Activated CD4-positive, alpha-beta T cell treated with anti-CD3 and anti-CD28 coated beads, Interleukin-2, amount 10 ng/mL, durations not matched to agents 7 days and 5 days (primary cell): ENCODE measurements at regions of chr14 and their contacts with region 1.

Region 1: GRCh38 chr14:64434528-64434927 is 30.8 kb upstream of the AKAP5 start:
- DNase-seq: no peak
- H3K4me3 Mint-ChIP-seq: no peak overlapping the region
- H3K27ac Mint-ChIP-seq: no peak overlapping the region
- H3K4me1 Mint-ChIP-seq: peaks cover 19% of the 10 kb centered on the region
- H3K27me3 Mint-ChIP-seq: no peaks in the 10 kb centered on the region

Region 2: GRCh38 chr14:64400829-64401459 is 33.6 kb before region 1 on chr14:
- CTCF ChIA-PET with region 1: interaction called, 10 read pairs
- POLR2A ChIA-PET with region 1: no interaction called
- DNase-seq: no peak
- H3K4me3 Mint-ChIP-seq: no peak overlapping the region
- H3K27ac Mint-ChIP-seq: no peak overlapping the region
- H3K4me1 Mint-ChIP-seq: peaks cover 15% of the 10 kb centered on the region
- H3K27me3 Mint-ChIP-seq: no peaks in the 10 kb centered on the region

Region 3: DNA sequence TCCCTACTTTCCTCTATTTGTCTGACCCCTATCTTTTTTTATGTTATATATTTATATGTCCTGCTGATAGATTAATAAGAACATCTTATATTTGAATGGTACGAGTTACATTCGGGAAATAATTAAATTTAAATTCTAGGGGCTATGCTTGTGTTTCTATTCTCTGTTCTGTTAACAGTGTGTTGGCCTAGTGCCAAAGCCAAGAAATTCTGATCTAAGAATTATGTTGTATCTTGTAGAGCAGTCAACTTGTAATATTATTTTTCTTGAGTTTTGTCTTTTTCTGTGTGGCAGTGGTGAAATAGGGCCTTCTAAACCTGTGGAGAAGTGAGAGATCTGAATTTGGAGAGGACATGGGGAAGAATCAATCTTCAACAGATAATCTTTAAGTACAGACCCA is 97.0 kb after region 1 on chr14:
- CTCF ChIA-PET with region 1: no interaction called
- POLR2A ChIA-PET with region 1: no interaction called
- DNase-seq: no peak
- H3K4me3 Mint-ChIP-seq: no peak overlapping the region
- H3K27ac Mint-ChIP-seq: no peak overlapping the region
- H3K4me1 Mint-ChIP-seq: peaks cover 4% of the 10 kb centered on the region
- H3K27me3 Mint-ChIP-seq: no peaks in the 10 kb centered on the region